Mammary epithelial cell (primary cell): ENCODE measurements at regions of chr20 and their contacts with region 1.

Region 1: GRCh38 chr20:51671058-51671457 is 97.1 kb downstream of the ATP9A start:
- DNase-seq: no peak
- H3K4me3 ChIP-seq: no peak overlapping the region
- H3K27ac ChIP-seq: no peak overlapping the region
- H3K4me1 ChIP-seq: no peaks in the 10 kb centered on the region
- H3K27me3 ChIP-seq: no peaks in the 10 kb centered on the region
- CTCF ChIP-seq: no peak

Region 2: DNA sequence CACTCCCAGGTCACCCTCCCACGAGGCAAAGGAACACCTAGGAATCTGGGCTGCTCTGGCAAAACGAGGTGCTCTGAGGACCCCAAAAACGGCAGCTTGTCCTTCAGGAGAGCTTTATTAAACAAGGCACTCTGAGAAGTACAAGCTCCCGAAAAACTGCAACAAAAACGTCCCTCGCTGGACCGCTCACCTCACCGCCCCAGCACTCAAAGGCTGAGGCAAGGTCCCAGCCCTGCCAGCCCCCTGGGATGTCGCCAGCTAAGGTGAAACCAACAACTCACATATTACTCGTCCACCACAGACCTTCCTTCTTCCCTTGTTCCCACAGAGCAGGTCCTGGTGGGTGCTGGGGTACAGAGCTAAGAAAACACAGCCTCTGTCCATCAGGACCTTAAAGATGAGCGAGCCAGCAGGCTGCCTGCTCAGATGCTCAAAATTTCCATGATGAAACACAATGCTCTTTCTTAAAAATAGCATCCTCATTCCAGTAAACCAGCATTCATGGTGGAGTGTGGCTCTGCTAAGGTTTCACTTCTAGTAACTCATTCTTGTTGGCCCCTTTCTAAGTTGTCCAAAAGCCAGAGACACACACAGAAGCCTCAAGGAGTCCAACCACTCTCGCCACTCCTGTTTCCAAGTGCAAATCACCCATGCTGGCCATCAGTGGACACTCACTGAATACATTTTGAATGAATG is 61.2 kb after region 1 on chr20:
- CTCF ChIA-PET with region 1: no interaction called
- dilution Hi-C with region 1: loop called (anchors 5 kb)
- in situ Hi-C with region 1: no loop called
- intact Hi-C with region 1: no loop called
- DNase-seq: no peak
- H3K4me3 ChIP-seq: no peak overlapping the region
- H3K27ac ChIP-seq: no peak overlapping the region
- H3K4me1 ChIP-seq: no peaks in the 10 kb centered on the region
- H3K27me3 ChIP-seq: peaks cover 2% of the 10 kb centered on the region
- CTCF ChIP-seq: no peak